K562 (cell line): ENCODE measurements at regions of chr2 and their contacts with region 1.

Region 1: GRCh38 chr2:155235710-155236109 is 537.2 kb downstream of the KCNJ3 start:
- DNase-seq: no peak
- ATAC-seq: no peak
- H3K4me3 ChIP-seq: no peak overlapping the region
- H3K27ac ChIP-seq: no peak overlapping the region
- H3K4me1 ChIP-seq: no peaks in the 10 kb centered on the region
- H3K27me3 ChIP-seq: no peaks in the 10 kb centered on the region
- CTCF ChIP-seq: no peak
- EP300 ChIP-seq: no peak
- POLR2A ChIP-seq: no peak
- RAD21 ChIP-seq: no peak

Region 2: DNA sequence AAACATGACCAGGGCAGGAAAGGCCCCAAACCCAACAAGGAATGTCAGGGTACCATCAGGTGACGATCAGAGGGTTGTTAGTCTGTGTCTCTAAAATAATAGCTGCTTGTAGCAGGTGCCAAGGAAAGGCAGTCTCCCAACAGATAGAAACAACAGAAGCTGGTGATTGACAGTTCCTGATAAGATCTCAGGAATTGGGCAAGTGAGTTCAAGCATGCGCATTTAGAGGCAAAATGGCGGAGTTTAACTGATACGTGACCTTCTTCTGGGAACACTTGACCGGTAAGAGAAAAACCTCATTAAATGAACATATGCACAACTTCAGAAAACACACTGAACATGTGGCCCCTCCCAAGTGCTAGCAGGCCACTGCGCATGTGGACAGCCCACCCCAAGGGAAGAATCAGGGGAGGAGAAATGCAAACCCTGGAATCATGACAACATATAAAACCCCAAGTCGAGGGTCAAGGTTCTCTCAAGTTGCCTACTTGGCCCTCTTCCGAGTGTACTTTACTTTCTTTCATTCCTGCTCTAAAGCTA is 127.7 kb after region 1 on chr2:
- CTCF ChIA-PET with region 1: no interaction called
- POLR2A ChIA-PET with region 1: no interaction called
- in situ Hi-C with region 1: no loop called
- intact Hi-C with region 1: loop called (anchors 5 kb)
- DNase-seq: peak; percentile 21 to 83 (median 40)
- ATAC-seq: peak; percentile 59
- H3K4me3 ChIP-seq: peak overlapping the region; percentile 30
- H3K27ac ChIP-seq: peak overlapping the region; percentile 85
- H3K4me1 ChIP-seq: peaks cover 0 to 3% of the 10 kb centered on the region in 2 experiments; a peak in 1 of 5 replicates
- H3K27me3 ChIP-seq: no peaks in the 10 kb centered on the region
- CTCF ChIP-seq: no peak
- EP300 ChIP-seq: no peak
- POLR2A ChIP-seq: 0 out of 2 replicates have a peak, but pooled peaks have one; percentile 23
- RAD21 ChIP-seq: no peak